B cell (primary cell): ENCODE measurements at regions of chr19 and their contacts with region 1.

Region 1: GRCh38 chr19:46821498-46822409 is 28.9 kb downstream of the AP2S1 start:
- DNase-seq: peak; percentile 85
- ATAC-seq: peak; percentile 66
- H3K4me3 ChIP-seq: peak overlapping the region in 3 of 5 experiments; percentile 23 to 51 (median 29)
- H3K4me3 Mint-ChIP-seq: peak overlapping the region; percentile 69
- H3K27ac ChIP-seq: peak overlapping the region; percentile 79
- H3K27ac Mint-ChIP-seq: peak overlapping the region; percentile 92
- H3K4me1 ChIP-seq: peaks cover 60 to 73% of the 10 kb centered on the region in 2 donors
- H3K4me1 Mint-ChIP-seq: peaks cover 52% of the 10 kb centered on the region
- H3K27me3 ChIP-seq: no peaks in the 10 kb centered on the region
- H3K27me3 Mint-ChIP-seq: no peaks in the 10 kb centered on the region
- CTCF ChIP-seq: no peak

Region 2: DNA sequence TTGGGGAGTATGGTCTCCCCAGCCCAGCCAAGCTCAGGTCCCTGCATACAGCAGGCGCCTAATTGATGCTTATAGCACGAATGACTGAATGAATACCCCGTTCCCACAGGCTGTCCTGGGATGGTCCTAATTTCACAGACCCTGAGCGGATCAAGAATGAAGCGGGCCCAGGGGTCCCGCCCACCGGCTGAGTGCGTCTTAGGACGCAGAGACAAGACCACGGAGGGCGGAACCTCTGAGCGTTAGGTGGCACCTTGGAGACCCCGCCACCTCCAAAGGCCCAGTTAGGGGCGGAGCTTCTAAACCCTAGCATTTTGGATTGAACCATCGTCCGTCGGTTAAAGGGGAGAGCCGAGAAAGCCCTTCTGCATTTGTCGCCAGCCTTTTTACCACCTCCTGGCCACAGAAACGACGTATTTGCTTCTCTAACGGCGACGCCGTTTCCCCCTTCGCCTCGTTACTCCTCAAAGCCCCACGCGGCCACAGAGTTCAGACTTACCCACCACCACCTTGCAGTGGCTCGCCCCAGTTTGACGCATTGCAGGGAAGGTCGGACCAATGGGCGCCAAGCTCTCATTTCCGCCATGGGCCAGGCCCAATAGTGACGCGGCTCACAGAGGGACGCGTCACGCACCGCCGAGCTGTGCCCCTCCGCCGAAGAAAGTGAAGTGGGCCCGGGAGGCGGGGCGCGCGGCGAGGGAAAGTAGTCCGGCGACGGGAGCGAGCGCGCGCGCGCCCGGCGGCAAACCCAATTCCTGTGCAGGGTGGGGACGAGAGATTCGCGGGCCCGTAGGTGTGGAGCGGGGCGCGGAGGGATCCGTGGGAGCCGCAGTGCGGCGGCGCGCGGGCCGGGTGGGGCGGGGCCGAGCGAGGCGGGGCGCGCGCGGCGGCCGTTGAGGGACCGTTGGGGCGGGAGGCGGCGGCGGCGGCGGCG is 221.1 kb before region 1 on chr19:
- CTCF ChIA-PET with region 1: no interaction called
- POLR2A ChIA-PET with region 1: no interaction called
- intact Hi-C with region 1: loop called (anchors 2 kb)
- DNase-seq: peak; percentile 100
- ATAC-seq: peak; percentile 89
- H3K4me3 ChIP-seq: peak overlapping the region; percentile 64 to 100 (median 99)
- H3K4me3 Mint-ChIP-seq: peak overlapping the region; percentile 100
- H3K27ac ChIP-seq: peak overlapping the region; percentile 98 to 100
- H3K27ac Mint-ChIP-seq: peak overlapping the region; percentile 100
- H3K4me1 ChIP-seq: peaks cover 19 to 30% of the 10 kb centered on the region in 2 donors
- H3K4me1 Mint-ChIP-seq: peaks cover 31% of the 10 kb centered on the region
- H3K27me3 ChIP-seq: no peaks in the 10 kb centered on the region
- H3K27me3 Mint-ChIP-seq: no peaks in the 10 kb centered on the region
- CTCF ChIP-seq: no peak

Region 3: DNA sequence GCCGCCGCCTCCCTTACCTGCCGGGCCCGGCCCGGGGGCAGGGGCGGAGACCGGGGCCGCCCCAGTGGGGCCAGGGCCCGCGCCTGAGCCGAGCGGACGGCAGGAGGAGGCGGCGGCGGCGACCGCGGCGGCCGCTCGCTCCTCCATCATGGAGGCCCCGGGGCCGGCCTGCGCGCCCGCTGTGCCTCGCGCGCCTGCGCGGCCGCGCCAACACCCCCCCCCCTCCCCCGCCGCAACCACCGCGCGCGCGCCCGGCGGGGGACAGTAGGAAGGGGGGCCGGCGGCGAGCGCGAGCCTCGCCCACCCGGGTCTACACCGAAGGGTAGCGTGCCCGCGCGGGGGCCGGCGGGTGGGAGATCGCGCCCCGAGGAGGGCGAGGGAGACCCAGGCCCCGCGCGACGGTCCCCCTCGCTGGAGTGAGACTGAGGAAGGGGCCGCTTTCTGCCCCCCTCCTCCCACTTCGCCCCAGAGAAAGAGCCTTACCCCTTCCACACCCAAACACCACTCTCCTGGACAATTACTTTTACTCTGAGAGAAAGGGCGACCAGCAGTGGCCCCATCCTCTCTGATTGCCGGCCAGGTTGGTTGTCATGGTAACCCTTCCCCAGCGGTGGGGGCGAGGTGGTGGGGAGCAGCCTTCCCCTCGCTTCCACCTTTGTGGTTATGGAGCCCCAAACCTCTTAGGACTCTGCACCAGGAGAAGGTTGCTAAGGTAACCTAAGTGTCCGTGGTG is 75.3 kb before region 1 on chr19 and contains the start of gene STRN4:
- CTCF ChIA-PET with region 1: interaction called, 10 read pairs
- POLR2A ChIA-PET with region 1: no interaction called
- intact Hi-C with region 1: no loop called
- DNase-seq: peak; percentile 82
- ATAC-seq: peak; percentile 78
- H3K4me3 ChIP-seq: peak within 1 kb of the TSS; percentile 51 to 87 (median 84)
- H3K4me3 Mint-ChIP-seq: peak within 1 kb of the TSS; percentile 93
- H3K27ac ChIP-seq: peak within 1 kb of the TSS; percentile 43 to 77
- H3K27ac Mint-ChIP-seq: peak within 1 kb of the TSS; percentile 85
- H3K4me1 ChIP-seq: peaks cover 15 to 43% of the 10 kb centered on the region in 2 donors
- H3K4me1 Mint-ChIP-seq: peaks cover 58% of the 10 kb centered on the region
- H3K27me3 ChIP-seq: no peaks in the 10 kb centered on the region
- H3K27me3 Mint-ChIP-seq: no peaks in the 10 kb centered on the region
- CTCF ChIP-seq: no peak
- total RNA-seq, gene STRN4: 102 and 112 TPM in 2 replicates

Region 4: DNA sequence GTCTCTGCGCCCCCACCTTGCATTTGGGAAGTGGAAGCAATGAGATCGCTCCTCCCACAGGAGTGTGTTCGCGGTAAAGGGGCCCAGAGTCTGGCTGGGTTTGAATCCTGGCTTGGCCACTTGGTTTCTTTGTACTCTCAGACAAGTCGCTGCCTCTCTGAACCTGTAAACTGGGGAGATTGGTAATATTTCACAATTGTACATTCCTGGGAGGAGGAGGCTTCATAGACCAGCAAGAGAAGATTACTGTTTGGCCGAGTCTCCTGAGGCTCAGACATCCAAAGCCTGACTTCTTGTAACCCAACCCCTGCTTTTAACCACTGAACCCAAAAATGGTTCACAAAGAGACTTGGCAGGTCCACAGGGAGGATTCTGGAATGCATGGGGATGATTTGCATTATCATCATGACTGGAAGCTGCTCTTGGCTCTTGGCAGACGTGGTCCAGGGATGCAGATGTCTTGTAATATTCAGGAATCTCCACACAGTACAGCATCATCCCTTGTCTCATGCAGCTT is 61.9 kb before region 1 on chr19:
- CTCF ChIA-PET with region 1: interaction called, 26 read pairs
- POLR2A ChIA-PET with region 1: interaction called, 5 read pairs
- intact Hi-C with region 1: loop called (anchors 2 kb)
- DNase-seq: no peak
- ATAC-seq: no peak
- H3K4me3 ChIP-seq: no peak overlapping the region
- H3K4me3 Mint-ChIP-seq: no peak overlapping the region
- H3K27ac ChIP-seq: no peak overlapping the region
- H3K27ac Mint-ChIP-seq: no peak overlapping the region
- H3K4me1 ChIP-seq: peaks cover 0 to 5% of the 10 kb centered on the region in 2 donors
- H3K4me1 Mint-ChIP-seq: peaks cover 2% of the 10 kb centered on the region
- H3K27me3 ChIP-seq: no peaks in the 10 kb centered on the region
- H3K27me3 Mint-ChIP-seq: no peaks in the 10 kb centered on the region
- CTCF ChIP-seq: no peak

Region 5: DNA sequence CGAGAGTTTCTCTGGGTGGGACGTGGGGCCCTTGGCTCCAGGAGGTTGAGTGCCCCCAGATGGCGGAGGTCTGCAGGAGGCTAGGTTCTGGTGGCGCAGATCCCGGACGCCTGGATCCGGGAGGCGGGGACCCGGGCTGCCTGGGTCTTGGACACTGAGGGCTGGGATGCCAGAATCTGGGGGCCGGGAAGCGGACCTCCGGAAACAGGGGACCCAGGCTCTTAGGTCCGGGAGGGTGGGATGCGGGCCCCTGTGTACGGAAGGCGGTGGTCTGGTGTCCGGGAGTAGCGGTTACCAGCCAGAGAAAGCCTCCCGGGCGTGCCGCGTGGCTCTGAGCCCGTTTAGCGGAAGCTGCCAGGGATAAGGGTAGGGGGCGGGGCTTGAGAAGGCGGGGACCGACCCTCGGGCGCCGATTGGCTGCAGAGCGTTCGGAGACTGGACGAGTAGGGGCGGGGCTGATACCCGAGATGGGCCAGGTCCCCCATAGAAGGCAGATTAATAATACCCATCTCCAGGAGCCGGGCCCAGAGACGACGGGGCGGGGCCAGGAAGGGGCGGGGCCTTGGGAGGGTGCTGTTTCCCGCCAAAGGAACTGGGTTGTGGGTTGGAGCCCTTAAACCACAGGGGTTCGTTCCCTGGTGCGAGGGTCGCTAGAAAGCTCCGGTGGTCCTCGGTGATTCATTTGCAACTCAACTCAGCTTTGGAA is 33.3 kb before region 1 on chr19 and contains the start of gene SLC1A5:
- CTCF ChIA-PET with region 1: interaction called, 9 read pairs
- POLR2A ChIA-PET with region 1: interaction called, 94 read pairs
- intact Hi-C with region 1: loop called (anchors 1 kb)
- DNase-seq: peak; percentile 97
- ATAC-seq: peak; percentile 86
- H3K4me3 ChIP-seq: peak within 1 kb of the TSS; percentile 67 to 95 (median 79)
- H3K4me3 Mint-ChIP-seq: peak within 1 kb of the TSS; percentile 93
- H3K27ac ChIP-seq: peak within 1 kb of the TSS; percentile 40 to 47
- H3K27ac Mint-ChIP-seq: peak within 1 kb of the TSS; percentile 98
- H3K4me1 ChIP-seq: peaks cover 32 to 51% of the 10 kb centered on the region in 2 donors
- H3K4me1 Mint-ChIP-seq: peaks cover 52% of the 10 kb centered on the region
- H3K27me3 ChIP-seq: no peaks in the 10 kb centered on the region
- H3K27me3 Mint-ChIP-seq: no peaks in the 10 kb centered on the region
- CTCF ChIP-seq: no peak
- total RNA-seq, gene SLC1A5: 35.2 and 37.3 TPM in 2 replicates